A549 (cell line): ENCODE measurements at regions of chr5 and their contacts with region 1.

Region 1: GRCh38 chr5:173144200-173145176 is at the start of gene BNIP1:
- DNase-seq: peak; percentile 94 to 95
- ATAC-seq: peak; percentile 96 to 97
- H3K4me3 ChIP-seq: peak within 1 kb of the TSS; percentile 71
- H3K27ac ChIP-seq: peak within 1 kb of the TSS; percentile 86 to 88
- H3K4me1 ChIP-seq: no peaks in the 10 kb centered on the region
- CTCF ChIP-seq: peak; percentile 95
- EP300 ChIP-seq: no peak
- POLR2A ChIP-seq: peak; percentile 40
- RAD21 ChIP-seq: peak; percentile 48 to 63
- polyA plus RNA-seq, gene BNIP1: 22.1 and 26.7 TPM in 2 replicates

Region 2: GRCh38 chr5:173155912-173156311 is 11.4 kb after region 1 on chr5:
- CTCF ChIA-PET with region 1: interaction called, 15 read pairs
- POLR2A ChIA-PET with region 1: no interaction called
- DNase-seq: no peak
- ATAC-seq: no peak
- H3K4me3 ChIP-seq: no peak overlapping the region
- H3K27ac ChIP-seq: no peak overlapping the region
- H3K4me1 ChIP-seq: no peaks in the 10 kb centered on the region
- CTCF ChIP-seq: no peak
- EP300 ChIP-seq: no peak
- POLR2A ChIP-seq: no peak
- RAD21 ChIP-seq: no peak

Region 3: DNA sequence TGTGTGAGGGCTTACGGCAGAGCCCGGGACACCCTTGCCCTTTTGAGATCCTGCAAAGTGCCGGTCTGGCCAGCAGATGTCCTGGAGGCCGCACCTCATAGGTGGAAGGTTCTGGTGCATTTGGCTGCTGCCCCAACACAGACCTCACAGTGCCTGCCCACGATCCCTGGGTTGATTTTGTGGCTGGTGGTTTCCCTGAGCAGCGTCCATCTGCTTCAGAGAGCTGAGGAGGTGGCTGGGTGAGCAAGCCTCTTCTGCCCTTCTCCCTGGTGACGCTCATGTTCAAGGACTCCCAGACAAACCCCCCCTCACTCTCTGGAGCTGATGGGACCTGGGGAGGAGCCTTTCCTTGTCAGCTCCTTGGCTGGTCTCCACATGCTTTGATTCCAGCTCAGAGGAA is 18.7 kb after region 1 on chr5:
- CTCF ChIA-PET with region 1: interaction called, 11 read pairs
- POLR2A ChIA-PET with region 1: no interaction called
- DNase-seq: no peak
- ATAC-seq: peak; percentile 40 to 43; a peak in 2 of 6 replicates
- H3K4me3 ChIP-seq: no peak overlapping the region
- H3K27ac ChIP-seq: no peak overlapping the region
- H3K4me1 ChIP-seq: no peaks in the 10 kb centered on the region
- CTCF ChIP-seq: no peak
- EP300 ChIP-seq: no peak
- POLR2A ChIP-seq: no peak
- RAD21 ChIP-seq: no peak

Region 4: DNA sequence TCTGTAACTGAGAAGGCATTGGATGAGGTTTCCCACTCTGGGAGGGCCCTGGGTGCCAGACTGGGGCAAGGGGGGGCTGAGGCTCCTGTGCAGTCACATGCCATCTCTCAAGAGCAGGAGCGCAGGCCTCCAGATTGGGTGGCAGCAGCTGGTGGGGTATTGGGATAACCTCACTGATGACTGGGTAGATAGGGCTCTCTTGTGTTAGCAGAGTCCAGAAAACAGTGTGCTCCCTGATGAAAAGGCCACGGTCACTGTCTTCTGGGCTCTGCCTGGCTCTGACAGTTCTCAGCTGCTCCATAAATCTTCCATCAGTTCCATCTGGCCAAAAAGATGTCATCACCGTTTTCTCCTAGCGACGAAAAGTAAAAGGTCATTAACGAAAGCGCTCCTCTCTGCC is 112.3 kb after region 1 on chr5:
- CTCF ChIA-PET with region 1: no interaction called
- POLR2A ChIA-PET with region 1: no interaction called
- DNase-seq: no peak
- ATAC-seq: no peak
- H3K4me3 ChIP-seq: no peak overlapping the region
- H3K27ac ChIP-seq: no peak overlapping the region
- H3K4me1 ChIP-seq: no peaks in the 10 kb centered on the region
- CTCF ChIP-seq: no peak
- EP300 ChIP-seq: no peak
- POLR2A ChIP-seq: no peak
- RAD21 ChIP-seq: no peak

Region 5: GRCh38 chr5:173352366-173353349 is 208.2 kb after region 1 on chr5:
- CTCF ChIA-PET with region 1: no interaction called
- POLR2A ChIA-PET with region 1: no interaction called
- DNase-seq: no peak
- ATAC-seq: no peak
- H3K4me3 ChIP-seq: no peak overlapping the region
- H3K27ac ChIP-seq: no peak overlapping the region
- H3K4me1 ChIP-seq: no peaks in the 10 kb centered on the region
- CTCF ChIP-seq: no peak
- EP300 ChIP-seq: no peak
- POLR2A ChIP-seq: no peak
- RAD21 ChIP-seq: no peak

Region 6: GRCh38 chr5:173383711-173384110 is 239.2 kb after region 1 on chr5:
- CTCF ChIA-PET with region 1: no interaction called
- POLR2A ChIA-PET with region 1: no interaction called
- DNase-seq: no peak
- ATAC-seq: no peak
- H3K4me3 ChIP-seq: no peak overlapping the region
- H3K27ac ChIP-seq: no peak overlapping the region
- H3K4me1 ChIP-seq: no peaks in the 10 kb centered on the region
- CTCF ChIP-seq: no peak
- EP300 ChIP-seq: no peak
- POLR2A ChIP-seq: no peak
- RAD21 ChIP-seq: no peak